Activated T-helper 2 cell treated with anti-CD3 and anti-CD28 coated beads, Interferon-gamma antibody, Interleukin-2, Interleukin-4, amounts not matched to agents 10 μg/mL and 5 μg/mL and 100 μg/mL, durations not matched to agents 14 hours and 24 hours and 36 hours (primary cell): ENCODE measurements at regions of chr9 and their contacts with region 1.

Region 1: GRCh38 chr9:70258692-70259511 is at the start of gene SMC5:
- DNase-seq: peak; percentile 89
- H3K4me3 Mint-ChIP-seq: peak within 1 kb of the TSS; percentile 87
- H3K27ac Mint-ChIP-seq: peak within 1 kb of the TSS; percentile 96
- H3K4me1 Mint-ChIP-seq: peaks cover 47% of the 10 kb centered on the region
- H3K27me3 Mint-ChIP-seq: peaks cover 7% of the 10 kb centered on the region
- total RNA-seq, gene SMC5: 45.3 and 51.0 TPM in 2 replicates

Region 2: DNA sequence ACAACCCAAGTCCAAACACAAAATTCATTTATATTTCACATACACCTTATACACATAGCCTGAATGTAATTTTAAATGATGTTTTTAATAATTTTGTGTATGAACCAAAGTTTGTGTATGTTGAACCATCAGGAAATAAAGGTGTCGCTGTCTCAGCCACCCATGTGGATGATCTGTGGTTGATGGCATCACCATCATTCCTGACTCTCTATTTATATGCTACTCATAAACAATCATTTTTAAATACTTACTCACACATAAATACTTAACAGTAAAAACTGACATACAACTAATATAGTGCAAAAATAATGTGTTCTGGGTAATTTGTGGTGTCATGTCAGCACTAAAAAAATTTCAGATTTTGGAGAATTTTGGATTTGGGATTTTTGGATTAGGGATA is 38.2 kb after region 1 on chr9:
- intact Hi-C with region 1: loop called (anchors 5 kb)
- DNase-seq: no peak
- H3K4me3 Mint-ChIP-seq: no peak overlapping the region
- H3K27ac Mint-ChIP-seq: no peak overlapping the region
- H3K4me1 Mint-ChIP-seq: peaks cover 12% of the 10 kb centered on the region
- H3K27me3 Mint-ChIP-seq: no peaks in the 10 kb centered on the region

Region 3: GRCh38 chr9:70519912-70520724 is 261.2 kb after region 1 on chr9:
- intact Hi-C with region 1: loop called (anchors 5 kb)
- DNase-seq: peak; percentile 12
- H3K4me3 Mint-ChIP-seq: peak overlapping the region; percentile 40
- H3K27ac Mint-ChIP-seq: peak overlapping the region; percentile 76
- H3K4me1 Mint-ChIP-seq: peaks cover 28% of the 10 kb centered on the region
- H3K27me3 Mint-ChIP-seq: no peaks in the 10 kb centered on the region

Region 4: DNA sequence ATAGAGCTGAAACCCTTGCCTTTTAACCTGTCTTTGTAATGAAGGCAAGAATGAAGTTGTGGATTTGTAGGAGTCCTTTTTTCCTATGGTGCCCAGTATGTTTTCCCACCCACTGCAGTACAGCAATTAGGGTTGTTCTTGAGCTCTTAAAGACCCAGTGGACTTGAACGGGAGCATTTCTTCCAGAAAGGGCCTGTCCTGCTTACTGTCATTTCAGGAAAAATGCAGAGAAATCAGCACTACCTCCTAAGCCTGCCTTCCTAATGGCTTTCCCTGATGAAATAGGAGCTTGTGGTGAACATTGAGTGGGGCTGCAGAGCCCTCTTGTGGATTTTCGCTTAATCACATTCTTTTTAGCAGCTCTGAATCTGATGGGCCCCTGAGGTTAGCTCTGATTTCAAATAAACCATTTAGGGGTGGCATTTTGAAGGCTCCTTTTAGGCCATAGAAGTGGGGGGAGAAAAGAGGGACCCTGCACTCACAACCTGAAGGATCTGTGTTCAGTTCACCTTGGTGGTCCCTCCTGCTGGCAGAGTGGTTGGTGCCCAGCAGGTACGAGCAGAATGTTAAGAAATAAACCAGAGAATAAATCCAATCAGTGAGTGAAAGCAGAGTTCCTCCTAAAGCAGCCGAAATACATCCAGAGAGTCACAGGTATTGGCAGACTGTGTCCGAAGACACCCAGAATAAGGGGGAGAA is 343.6 kb after region 1 on chr9:
- intact Hi-C with region 1: loop called (anchors 2 kb)
- DNase-seq: peak; percentile 14
- H3K4me3 Mint-ChIP-seq: no peak overlapping the region
- H3K27ac Mint-ChIP-seq: no peak overlapping the region
- H3K4me1 Mint-ChIP-seq: peaks cover 1% of the 10 kb centered on the region
- H3K27me3 Mint-ChIP-seq: no peaks in the 10 kb centered on the region